Astrocyte of the cerebellum (primary cell): ENCODE measurements at regions of chr6 and their contacts with region 1.

Region 1: GRCh38 chr6:160261991-160262680 is 3.5 kb upstream of the SLC22A2 start:
- DNase-seq: no peak
- H3K4me3 ChIP-seq: no peak overlapping the region
- CTCF ChIP-seq: no peak

Region 2: DNA sequence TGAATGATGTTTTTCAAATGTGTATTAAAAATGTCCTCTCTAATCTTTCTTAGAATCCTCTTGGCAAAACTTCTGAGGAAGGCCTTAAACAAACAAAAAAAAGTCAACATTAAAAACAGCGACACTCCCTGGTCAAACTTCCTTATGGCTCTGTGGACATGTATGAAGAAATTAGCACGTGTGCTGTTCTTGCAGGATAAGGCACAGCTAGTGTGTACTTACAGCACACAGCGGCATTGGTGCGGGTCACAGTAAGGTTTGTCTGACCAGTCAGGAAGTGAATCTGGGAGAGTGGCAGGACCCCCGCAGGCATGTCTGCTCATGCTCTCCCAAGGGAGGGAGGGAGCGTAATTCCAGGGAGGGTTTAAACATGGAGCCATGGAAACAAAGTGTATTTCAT is 101.7 kb before region 1 on chr6:
- in situ Hi-C with region 1: no loop called
- DNase-seq: peak; percentile 1
- H3K4me3 ChIP-seq: no peak overlapping the region
- CTCF ChIP-seq: peak; percentile 17

Region 3: DNA sequence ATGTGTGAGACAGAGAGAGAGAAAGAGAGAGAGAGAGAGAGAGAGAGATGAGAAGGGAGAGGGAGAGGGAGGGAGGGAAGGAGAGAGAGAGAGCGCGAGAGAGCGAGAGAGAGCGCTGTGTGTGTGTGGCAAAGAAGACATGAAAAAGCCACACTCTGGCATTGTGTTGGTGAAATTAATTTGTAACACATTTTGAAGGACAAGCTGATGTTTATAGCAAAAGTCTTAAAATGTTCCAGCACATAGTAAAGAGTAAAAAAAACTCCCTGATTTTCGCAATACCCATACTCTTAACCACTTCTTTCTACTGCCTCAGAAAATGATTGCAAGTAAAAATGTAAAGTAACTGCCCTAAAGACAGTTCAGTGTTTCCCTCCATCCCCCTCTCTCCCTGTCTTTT is 83.9 kb before region 1 on chr6:
- in situ Hi-C with region 1: loop called (anchors 5 kb)
- DNase-seq: no peak
- H3K4me3 ChIP-seq: no peak overlapping the region
- CTCF ChIP-seq: no peak